Activated CD8-positive, alpha-beta T cell treated with anti-CD3 and anti-CD28 coated beads for 36 hours (primary cell): ENCODE measurements at regions of chr1 and their contacts with region 1.

Region 1: DNA sequence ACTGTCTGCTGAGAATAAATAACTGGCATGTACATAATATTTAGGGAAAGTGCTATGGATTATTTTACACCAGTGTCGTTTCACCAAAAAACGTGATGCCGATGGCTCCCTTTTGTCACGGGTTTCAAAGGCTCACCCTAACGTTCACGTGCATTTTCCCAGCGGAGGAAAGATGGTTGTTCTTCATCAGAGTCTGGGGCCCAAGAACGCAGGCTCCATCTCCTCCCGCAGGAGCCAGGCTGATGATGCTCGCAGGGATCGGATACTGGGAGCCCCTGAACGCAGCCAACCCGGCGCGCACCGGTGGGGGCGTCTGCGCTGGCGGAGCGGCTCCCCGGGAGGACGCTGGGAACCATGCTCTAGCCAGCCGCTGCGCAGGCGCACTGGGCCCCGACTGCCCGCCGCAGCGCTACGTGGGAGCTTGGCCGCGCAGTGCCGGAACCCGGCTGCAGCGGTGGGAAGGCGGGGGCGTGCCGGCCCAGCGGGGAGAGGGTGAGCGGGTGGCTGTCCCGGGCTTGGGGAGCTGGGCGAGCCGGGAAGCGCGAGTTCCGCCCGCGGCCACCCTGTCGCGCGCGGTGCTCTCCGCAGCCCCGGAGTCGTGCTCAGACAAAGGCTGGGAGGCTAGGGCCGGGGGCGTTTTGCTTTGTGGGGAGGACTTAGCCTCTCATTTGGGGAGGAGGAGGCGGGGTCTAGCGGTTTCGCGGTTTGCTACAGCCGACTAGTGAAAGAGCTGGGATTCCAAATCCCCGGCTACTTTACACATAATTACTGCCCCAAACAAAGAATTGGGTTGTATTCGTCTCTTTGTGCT is at the start of gene ZFP69B:
- DNase-seq: peak; percentile 96
- ATAC-seq: peak; percentile 61
- H3K4me3 Mint-ChIP-seq: peak within 1 kb of the TSS; percentile 86
- H3K27ac Mint-ChIP-seq: peak within 1 kb of the TSS; percentile 99
- H3K4me1 Mint-ChIP-seq: peaks cover 34% of the 10 kb centered on the region
- H3K27me3 Mint-ChIP-seq: no peaks in the 10 kb centered on the region
- CTCF ChIP-seq: no peak
- total RNA-seq, gene ZFP69B: 3.5 to 4.1 TPM

Region 2: GRCh38 chr1:40385437-40386358 is 64.2 kb before region 1 on chr1:
- CTCF ChIA-PET with region 1: interaction called, 4 read pairs
- POLR2A ChIA-PET with region 1: interaction called, 10 read pairs
- intact Hi-C with region 1: no loop called
- DNase-seq: peak; percentile 85
- ATAC-seq: peak; percentile 67
- H3K4me3 Mint-ChIP-seq: peak overlapping the region; percentile 78
- H3K27ac Mint-ChIP-seq: peak overlapping the region; percentile 99
- H3K4me1 Mint-ChIP-seq: peaks cover 78% of the 10 kb centered on the region
- H3K27me3 Mint-ChIP-seq: no peaks in the 10 kb centered on the region
- CTCF ChIP-seq: no peak

Region 3: DNA sequence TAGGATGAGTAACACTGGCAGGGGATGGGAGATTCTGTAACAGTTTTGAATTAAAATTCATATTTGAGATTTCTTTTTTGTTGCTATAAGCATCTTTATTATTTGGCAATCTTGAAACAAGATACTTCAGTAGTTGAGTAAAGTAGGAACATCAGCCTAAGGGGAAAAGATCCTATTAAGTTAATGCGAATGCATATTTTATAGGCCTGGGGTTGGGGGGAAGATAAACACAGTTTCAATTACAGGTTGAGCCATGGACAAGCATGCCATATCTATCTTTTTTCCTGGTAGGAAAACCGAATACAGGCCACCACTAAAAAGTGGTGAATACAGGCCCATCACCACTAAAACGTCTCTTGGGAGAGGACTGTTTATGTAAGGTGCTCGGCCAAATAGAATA is 44.1 kb before region 1 on chr1:
- CTCF ChIA-PET with region 1: no interaction called
- POLR2A ChIA-PET with region 1: no interaction called
- intact Hi-C with region 1: no loop called
- DNase-seq: no peak
- ATAC-seq: no peak
- H3K4me3 Mint-ChIP-seq: no peak overlapping the region
- H3K27ac Mint-ChIP-seq: peak overlapping the region; percentile 61
- H3K4me1 Mint-ChIP-seq: peaks cover 70% of the 10 kb centered on the region
- H3K27me3 Mint-ChIP-seq: no peaks in the 10 kb centered on the region
- CTCF ChIP-seq: no peak

Region 4: DNA sequence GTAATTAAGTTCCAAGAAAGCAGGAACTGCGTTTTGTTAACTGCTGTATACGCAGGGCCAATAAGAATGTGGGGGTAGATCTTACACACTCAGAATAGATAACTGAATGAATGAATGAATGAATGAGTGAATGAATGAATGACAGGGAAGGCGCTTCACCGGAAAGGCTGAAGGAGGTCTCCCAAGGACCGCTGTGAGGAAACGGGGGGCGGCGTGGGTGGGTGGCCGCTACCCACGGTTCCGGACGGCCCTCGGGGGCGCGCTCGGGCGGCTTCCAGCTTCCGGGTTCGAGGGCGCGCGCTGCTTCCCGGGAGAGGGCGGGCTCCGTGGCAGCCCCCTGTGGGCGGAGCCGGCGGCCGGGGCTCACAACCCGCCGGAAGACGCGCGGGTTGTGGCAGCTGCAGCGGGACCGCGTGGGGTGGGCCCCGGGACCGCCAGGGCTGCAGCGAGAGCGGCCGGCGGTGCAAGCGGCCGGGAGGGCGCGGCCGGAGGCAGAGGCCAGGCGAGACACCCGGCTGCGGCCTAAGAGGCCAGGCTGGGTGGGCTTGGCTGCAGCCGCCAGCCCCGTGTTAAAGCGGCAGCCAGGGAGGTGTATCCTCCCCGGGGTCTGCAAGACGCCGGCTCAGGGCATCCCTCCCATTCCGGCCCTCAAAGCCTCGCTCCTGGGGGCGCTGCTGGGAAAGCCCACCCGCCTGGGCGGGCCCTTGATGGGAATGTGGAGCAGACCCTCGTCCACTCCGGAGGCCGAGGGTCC is 27.2 kb after region 1 on chr1 and contains the start of gene ZFP69:
- CTCF ChIA-PET with region 1: interaction called, 3 read pairs
- POLR2A ChIA-PET with region 1: interaction called, 14 read pairs
- intact Hi-C with region 1: no loop called
- DNase-seq: peak; percentile 77
- ATAC-seq: peak; percentile 92
- H3K4me3 Mint-ChIP-seq: peak within 1 kb of the TSS; percentile 77
- H3K27ac Mint-ChIP-seq: peak within 1 kb of the TSS; percentile 78
- H3K4me1 Mint-ChIP-seq: peaks cover 21% of the 10 kb centered on the region
- H3K27me3 Mint-ChIP-seq: no peaks in the 10 kb centered on the region
- CTCF ChIP-seq: no peak
- total RNA-seq, gene ZFP69: 4.2 to 4.7 TPM

Region 5: GRCh38 chr1:40508375-40509341 is 58.8 kb after region 1 on chr1 and contains the start of gene EXO5:
- CTCF ChIA-PET with region 1: no interaction called
- POLR2A ChIA-PET with region 1: interaction called, 16 read pairs
- intact Hi-C with region 1: loop called (anchors 10 kb)
- DNase-seq: peak; percentile 91
- ATAC-seq: peak; percentile 99
- H3K4me3 Mint-ChIP-seq: peak within 1 kb of the TSS; percentile 79
- H3K27ac Mint-ChIP-seq: peak within 1 kb of the TSS; percentile 90
- H3K4me1 Mint-ChIP-seq: peaks cover 15% of the 10 kb centered on the region
- H3K27me3 Mint-ChIP-seq: no peaks in the 10 kb centered on the region
- CTCF ChIP-seq: no peak
- total RNA-seq, gene EXO5: 8.7 to 10.2 TPM

Region 6: DNA sequence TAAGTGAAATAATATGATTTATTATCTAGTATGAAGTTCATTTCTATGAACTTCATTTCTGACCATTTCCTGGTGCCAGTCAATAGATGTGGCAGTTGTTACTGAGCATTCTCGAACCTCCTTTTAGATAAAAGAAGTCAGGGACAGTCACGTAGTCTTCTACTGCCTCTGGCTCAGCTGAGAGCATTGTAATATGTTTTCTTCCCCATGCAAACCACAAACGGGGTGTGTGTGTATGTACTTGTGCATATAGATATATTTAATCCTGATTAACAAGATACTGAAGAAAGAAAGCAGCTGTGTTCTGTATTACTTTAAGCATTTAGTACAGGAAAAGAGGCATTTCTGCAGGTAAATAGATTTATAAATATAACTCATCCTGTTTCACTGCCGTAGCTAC is 103.1 kb after region 1 on chr1:
- CTCF ChIA-PET with region 1: no interaction called
- POLR2A ChIA-PET with region 1: no interaction called
- intact Hi-C with region 1: no loop called
- DNase-seq: no peak
- ATAC-seq: no peak
- H3K4me3 Mint-ChIP-seq: no peak overlapping the region
- H3K27ac Mint-ChIP-seq: no peak overlapping the region
- H3K4me1 Mint-ChIP-seq: no peaks in the 10 kb centered on the region
- H3K27me3 Mint-ChIP-seq: no peaks in the 10 kb centered on the region
- CTCF ChIP-seq: no peak

Region 7: DNA sequence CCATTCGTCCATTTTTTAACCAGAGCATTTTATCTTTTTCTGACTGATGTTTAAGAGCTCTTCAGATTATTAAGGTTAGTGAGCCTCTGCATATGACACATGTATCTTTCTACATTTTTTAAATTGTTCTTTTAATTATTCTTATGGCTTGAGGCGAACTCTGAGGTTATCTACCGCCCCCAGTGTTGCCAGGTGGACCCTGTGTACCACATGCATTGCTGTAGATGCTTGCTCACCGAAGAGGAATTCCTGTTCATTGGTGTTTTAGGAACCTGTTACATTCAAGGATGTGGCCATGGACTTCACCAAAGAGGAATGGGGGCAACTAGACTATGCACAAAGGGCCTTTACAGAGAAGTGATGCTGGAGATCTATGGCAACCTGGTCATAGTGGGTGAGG is 113.4 kb after region 1 on chr1:
- CTCF ChIA-PET with region 1: no interaction called
- POLR2A ChIA-PET with region 1: no interaction called
- intact Hi-C with region 1: no loop called
- DNase-seq: no peak
- ATAC-seq: no peak
- H3K4me3 Mint-ChIP-seq: no peak overlapping the region
- H3K27ac Mint-ChIP-seq: no peak overlapping the region
- H3K4me1 Mint-ChIP-seq: peaks cover 10% of the 10 kb centered on the region
- H3K27me3 Mint-ChIP-seq: no peaks in the 10 kb centered on the region
- CTCF ChIP-seq: no peak